ENCODE measurements at regions of chr15 and their contacts with region 1.

Region 1: DNA sequence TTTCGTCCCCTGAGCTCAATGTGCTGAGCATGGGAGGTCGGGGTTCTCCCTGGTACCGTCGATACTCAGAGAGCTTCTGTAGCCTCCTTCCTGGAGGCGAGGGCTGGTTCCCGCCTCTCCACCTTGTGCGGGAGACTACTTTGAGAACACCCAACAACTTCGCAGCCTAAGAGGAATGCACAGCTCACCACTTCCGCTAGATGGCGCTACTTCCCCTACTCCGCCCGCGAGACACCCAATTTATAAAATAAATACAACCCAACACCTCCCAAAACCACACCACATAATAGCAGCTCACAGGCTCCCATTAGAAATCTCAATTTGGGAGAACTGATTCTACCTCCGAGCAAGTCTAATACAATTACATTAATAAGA is 1.2 kb downstream of the RGMA start:
- DNase-seq: peak; percentile 85
- ATAC-seq: peak; percentile 76

Region 2: DNA sequence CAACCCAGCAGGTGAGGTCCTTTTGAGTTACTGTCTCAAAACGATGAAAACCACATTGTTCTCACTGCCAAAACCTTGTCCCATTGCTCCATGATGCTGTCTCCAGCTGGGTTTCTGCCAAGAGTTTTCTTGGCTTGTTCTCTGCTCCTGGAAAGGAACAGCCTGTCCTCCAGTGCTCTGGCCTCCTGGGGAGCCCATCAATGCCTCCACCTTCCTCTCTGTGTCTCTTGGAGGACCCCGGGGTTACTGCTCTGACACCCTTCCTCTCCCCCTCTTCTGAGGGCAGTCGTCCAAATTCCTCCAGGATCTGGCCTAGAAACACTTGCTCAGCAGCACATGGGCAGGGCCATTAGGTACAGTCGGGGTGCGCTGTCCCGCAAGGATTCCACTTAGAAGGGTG is 65.1 kb after region 1 on chr15:
- intact Hi-C with region 1: loop called (anchors 2 kb)
- DNase-seq: peak; percentile 78
- ATAC-seq: peak; percentile 93

Region 3: DNA sequence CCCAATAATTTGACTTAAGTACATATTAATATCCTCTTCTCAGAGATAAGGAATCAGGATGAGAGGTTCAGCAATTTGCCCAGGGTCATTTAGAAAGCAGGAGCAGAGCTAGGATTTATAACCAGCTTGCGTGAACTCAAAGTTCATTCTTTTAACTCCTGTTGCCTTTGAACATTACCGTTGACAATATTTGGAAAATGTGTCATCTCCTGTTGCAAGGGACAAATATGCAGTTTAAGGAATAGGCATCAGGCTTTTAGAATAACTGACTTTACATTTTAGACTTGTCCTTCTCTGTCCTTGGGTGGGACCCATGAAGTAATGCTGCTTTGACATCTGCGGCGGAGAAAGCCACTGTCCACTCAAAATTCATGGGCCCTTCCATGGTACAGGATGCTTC is 253.4 kb after region 1 on chr15:
- intact Hi-C with region 1: loop called (anchors 5 kb)
- DNase-seq: no peak
- ATAC-seq: no peak

Measured in Right ventricle myocardium superior (tissue), 1 donor.